ENCODE measurements at regions of chr15 and their contacts with region 1.

Region 1: GRCh38 chr15:83559310-83559966 is 94.5 kb upstream of the ADAMTSL3 start:
- DNase-seq: peak; percentile 67
- H3K4me3 Mint-ChIP-seq: no peak overlapping the region
- H3K27ac Mint-ChIP-seq: no peak overlapping the region
- H3K4me1 Mint-ChIP-seq: no peaks in the 10 kb centered on the region
- H3K27me3 Mint-ChIP-seq: no peaks in the 10 kb centered on the region

Region 2: DNA sequence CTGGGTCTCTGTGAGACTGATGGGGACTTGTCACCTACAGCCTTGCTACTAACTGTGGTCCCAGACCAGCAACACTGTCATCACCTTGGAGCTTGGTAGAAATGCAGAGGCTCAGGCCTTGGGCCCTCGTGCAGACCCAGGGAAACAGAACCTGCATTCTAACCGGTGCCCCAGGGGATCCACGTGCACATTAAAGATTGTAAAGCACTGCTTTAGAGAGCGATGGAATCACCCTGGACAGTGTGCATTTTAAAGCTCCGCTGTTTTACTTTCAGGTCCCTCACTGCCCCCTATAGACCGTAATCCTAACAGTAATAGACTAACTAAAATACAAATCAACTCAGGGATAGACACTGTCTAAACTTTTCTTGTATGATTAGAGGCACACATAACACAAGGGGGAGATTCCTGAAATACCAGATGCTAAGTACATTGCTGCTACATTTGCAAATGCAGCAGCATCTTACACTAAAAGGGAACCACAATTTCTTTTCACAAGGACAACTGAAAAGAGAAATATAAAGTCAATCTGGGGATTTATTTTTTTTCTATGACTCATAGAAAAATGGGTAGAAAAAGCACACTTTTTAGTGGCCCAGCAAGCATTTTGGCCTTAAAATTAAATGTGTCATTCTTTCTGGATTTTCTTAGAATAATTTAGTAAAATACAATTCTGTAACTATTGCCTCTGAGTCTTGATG is 122.8 kb before region 1 on chr15:
- CTCF ChIA-PET with region 1: interaction called, 51 read pairs
- DNase-seq: no peak
- H3K4me3 Mint-ChIP-seq: no peak overlapping the region
- H3K27ac Mint-ChIP-seq: no peak overlapping the region
- H3K4me1 Mint-ChIP-seq: no peaks in the 10 kb centered on the region
- H3K27me3 Mint-ChIP-seq: peaks cover 11% of the 10 kb centered on the region